ENCODE measurements at regions of chr2 and their contacts with region 1.

Region 1: DNA sequence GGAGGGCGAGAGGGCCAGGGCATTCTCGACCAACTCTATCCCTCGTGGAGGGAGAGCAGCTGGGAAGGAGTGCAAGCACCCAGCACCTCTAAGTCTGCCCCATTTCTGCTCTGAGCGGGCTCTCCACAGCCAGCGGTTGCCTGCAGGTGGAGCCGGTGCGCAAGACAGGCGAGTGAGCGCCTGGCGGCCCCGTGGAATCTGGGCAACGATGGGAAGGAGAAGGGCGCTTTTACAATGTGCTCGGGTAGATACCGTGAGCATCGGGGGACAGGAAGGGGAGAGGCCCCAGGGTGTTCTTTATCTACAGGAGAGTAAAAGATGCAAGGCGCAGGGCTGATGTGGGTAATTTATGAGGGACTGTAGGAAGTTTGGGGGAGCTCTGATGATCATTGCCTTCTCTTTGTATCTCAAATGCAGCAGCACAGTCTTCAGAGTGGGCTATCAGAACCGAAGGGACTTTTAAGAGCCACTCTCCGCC is 867 bp upstream of the TTL start:
- DNase-seq: no peak
- H3K4me3 ChIP-seq: peak overlapping the region; percentile 73 to 75
- H3K27ac ChIP-seq: peak overlapping the region; percentile 79
- H3K4me1 ChIP-seq: peaks cover 18% of the 10 kb centered on the region
- H3K27me3 ChIP-seq: no peaks in the 10 kb centered on the region
- CTCF ChIP-seq: peak; percentile 60 to 68 (median 62)
- POLR2A ChIP-seq: no peak

Region 2: DNA sequence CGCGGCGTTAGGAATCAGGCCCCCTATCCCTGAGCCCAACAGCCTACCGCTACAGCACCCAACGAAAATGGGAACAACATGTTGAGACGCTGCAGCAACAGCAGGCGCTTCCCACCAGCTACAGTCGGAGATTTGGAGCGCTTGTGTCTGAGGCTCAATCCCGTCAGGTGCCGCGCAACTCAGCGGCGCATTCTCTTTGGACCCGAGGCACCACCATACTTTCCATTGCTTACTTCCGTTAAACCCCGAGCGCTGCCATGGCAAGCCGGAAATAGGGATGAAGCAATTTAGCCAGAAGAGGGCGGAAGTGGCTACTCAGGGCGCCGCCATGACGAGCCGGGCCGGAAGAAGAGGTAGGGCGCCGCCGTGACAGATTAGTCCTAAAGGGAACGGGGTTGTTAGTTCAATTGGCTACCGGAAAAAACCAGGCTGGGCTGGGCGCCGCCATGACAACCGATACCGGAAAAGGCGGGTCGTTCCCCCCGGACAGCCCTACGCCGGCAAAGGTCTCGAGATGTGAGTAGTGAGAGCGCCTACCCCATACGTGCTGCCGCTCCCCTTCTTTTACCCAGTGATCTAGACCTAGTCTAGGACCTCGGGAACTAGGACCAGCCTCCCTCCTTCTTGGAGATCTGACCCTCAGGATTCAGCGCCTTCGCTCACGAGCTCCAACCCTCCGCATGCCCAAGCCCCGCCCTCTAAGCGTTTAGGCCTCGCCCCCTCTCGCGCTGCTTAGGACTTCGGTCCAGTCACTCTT is 103.2 kb after region 1 on chr2 and contains the start of gene CHCHD5:
- intact Hi-C with region 1: loop called (anchors 10 kb)
- DNase-seq: peak; percentile 97 to 98
- H3K4me3 ChIP-seq: peak within 1 kb of the TSS; percentile 60 to 64
- H3K27ac ChIP-seq: peak within 1 kb of the TSS; percentile 83
- H3K4me1 ChIP-seq: peaks cover 29% of the 10 kb centered on the region
- H3K27me3 ChIP-seq: no peaks in the 10 kb centered on the region
- CTCF ChIP-seq: peak in 1 of 3 experiments; percentile 11
- POLR2A ChIP-seq: peak in 1 of 2 donors; percentile 4
- total RNA-seq, gene CHCHD5: 30.7 TPM

Measured in vagina (tissue), 2 donors.